Activated naive CD4-positive, alpha-beta T cell treated with anti-CD3 and anti-CD28 coated beads, Interleukin-2, amount 10 ng/mL, durations not matched to agents 7 days and 5 days (primary cell): ENCODE measurements at regions of chr11 and their contacts with region 1.

Region 1: DNA sequence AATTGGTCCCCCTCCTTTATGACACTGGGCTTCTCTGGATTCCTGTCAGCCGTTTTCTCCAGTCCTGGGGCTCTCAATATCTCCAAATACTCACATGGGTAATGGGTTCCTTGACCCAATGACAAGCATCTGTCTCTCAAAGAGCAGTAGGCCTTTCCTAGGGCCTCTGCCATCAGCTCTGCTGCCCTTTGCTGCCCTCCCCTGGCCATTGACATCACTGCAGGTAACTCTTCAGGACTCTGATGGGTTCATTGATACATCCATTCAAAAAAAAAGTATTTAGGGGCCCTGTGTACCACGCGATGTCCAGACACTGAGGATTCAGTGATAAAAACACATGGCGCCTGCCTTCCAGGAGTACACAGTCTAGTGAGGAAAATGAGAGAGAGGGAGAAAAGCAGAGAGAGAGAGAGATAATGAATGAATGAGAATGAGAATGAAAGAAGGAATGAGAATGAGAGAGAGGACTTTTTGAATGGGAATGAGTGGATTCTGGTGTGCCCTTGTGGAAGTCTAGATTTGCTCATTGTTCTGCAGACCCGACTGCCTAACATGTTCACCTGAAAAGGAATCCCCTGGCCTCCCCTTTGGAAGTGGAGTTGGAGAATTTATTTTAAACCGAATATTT is 42.6 kb upstream of the OLFML1 start:
- DNase-seq: peak; percentile 83
- H3K4me3 Mint-ChIP-seq: no peak overlapping the region
- H3K27ac Mint-ChIP-seq: no peak overlapping the region
- H3K4me1 Mint-ChIP-seq: peaks cover 3% of the 10 kb centered on the region
- H3K27me3 Mint-ChIP-seq: peaks cover 8% of the 10 kb centered on the region

Region 2: DNA sequence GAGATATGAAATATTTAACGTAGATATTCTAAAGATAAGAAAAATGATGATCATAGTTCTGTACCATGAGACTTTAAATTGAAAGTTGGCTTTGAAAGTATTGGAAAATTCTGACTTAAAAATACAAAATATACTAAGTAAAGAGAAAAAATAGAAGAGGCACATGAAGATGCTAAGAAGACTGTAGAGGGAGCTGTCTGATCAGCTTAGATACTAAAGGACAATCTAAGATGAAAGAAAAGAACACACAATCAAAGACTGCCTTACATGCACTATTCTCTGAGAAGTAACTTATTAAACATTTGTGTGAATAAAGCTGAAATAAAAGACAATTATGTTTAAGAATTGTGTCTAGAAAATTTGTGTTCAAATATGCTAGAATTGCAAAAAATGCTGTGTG is 298.8 kb before region 1 on chr11:
- CTCF ChIA-PET with region 1: interaction called, 10 read pairs
- DNase-seq: no peak
- H3K4me3 Mint-ChIP-seq: no peak overlapping the region
- H3K27ac Mint-ChIP-seq: no peak overlapping the region
- H3K4me1 Mint-ChIP-seq: no peaks in the 10 kb centered on the region
- H3K27me3 Mint-ChIP-seq: no peaks in the 10 kb centered on the region

Region 3: DNA sequence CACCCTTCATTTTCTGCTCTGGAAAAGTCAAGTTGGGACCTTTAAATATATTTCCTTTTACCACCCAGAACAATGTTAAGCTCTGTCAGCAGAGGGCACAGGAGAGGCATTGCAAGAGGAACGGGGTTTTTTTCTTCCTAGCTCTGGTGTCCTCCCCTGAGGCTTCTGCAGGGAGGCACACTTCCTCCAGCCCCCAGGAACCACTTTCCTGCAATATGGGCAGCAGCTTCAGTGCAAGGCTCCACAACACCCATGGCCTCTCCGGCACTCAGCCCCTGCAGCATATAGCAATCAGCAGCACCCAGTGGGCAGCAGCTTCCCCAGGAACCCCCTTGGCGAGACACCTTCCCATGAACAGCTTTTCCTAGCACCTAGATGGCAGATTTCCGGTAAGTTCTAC is 89.6 kb before region 1 on chr11:
- CTCF ChIA-PET with region 1: interaction called, 101 read pairs
- DNase-seq: peak; percentile 43
- H3K4me3 Mint-ChIP-seq: no peak overlapping the region
- H3K27ac Mint-ChIP-seq: no peak overlapping the region
- H3K4me1 Mint-ChIP-seq: no peaks in the 10 kb centered on the region
- H3K27me3 Mint-ChIP-seq: peaks cover 4% of the 10 kb centered on the region